CD4-positive, alpha-beta memory T cell (primary cell): ENCODE measurements at regions of chr12 and their contacts with region 1.

Region 1: DNA sequence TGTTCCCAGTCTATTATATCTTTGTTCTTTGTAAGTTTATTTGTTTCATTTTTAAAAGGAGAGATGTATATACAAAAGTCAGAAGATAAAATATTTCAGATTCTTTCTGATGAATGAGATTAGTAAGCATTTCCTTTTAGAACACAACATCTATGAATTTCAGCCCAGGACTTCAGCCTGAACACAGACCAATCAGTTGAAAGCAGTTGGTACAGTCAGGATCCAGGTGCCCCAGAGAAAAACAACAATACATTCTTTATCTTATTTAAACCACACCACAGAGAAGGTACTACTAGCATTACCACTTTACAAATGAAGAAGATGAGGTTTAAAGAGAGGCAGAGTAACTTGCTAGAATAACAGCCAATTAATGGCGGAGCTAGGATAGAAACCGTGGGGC is 114.2 kb upstream of the BTG1 start:
- DNase-seq: no peak
- H3K4me3 ChIP-seq: no peak overlapping the region
- H3K4me3 Mint-ChIP-seq: peak overlapping the region in 1 of 8 donors; percentile 1
- H3K27ac ChIP-seq: no peak overlapping the region
- H3K27ac Mint-ChIP-seq: peak overlapping the region in 2 of 7 donors; percentile 18 to 38
- H3K4me1 ChIP-seq: peaks cover 10% of the 10 kb centered on the region
- H3K4me1 Mint-ChIP-seq: peaks cover 11 to 22% (median 13%) of the 10 kb centered on the region in 4 donors
- H3K27me3 ChIP-seq: no peaks in the 10 kb centered on the region
- H3K27me3 Mint-ChIP-seq: no peaks in the 10 kb centered on the region

Region 2: GRCh38 chr12:92297932-92298696 is 38.3 kb after region 1 on chr12:
- CTCF ChIA-PET with region 1: no interaction called
- POLR2A ChIA-PET with region 1: no interaction called
- intact Hi-C with region 1: loop called (anchors 5 kb)
- DNase-seq: peak in 4 of 5 donors; percentile 33 to 49 (median 46)
- H3K4me3 ChIP-seq: no peak overlapping the region
- H3K4me3 Mint-ChIP-seq: peak overlapping the region; percentile 28 to 78 (median 72)
- H3K27ac ChIP-seq: no peak overlapping the region
- H3K27ac Mint-ChIP-seq: peak overlapping the region in 5 of 7 donors; percentile 76 to 93 (median 93)
- H3K4me1 ChIP-seq: peaks cover 40% of the 10 kb centered on the region
- H3K4me1 Mint-ChIP-seq: peaks cover 21 to 33% (median 28%) of the 10 kb centered on the region in 4 donors
- H3K27me3 ChIP-seq: no peaks in the 10 kb centered on the region
- H3K27me3 Mint-ChIP-seq: no peaks in the 10 kb centered on the region

Region 3: GRCh38 chr12:92369643-92370042 is 109.8 kb after region 1 on chr12:
- CTCF ChIA-PET with region 1: no interaction called
- POLR2A ChIA-PET with region 1: no interaction called
- intact Hi-C with region 1: no loop called
- DNase-seq: no peak
- H3K4me3 ChIP-seq: no peak overlapping the region
- H3K4me3 Mint-ChIP-seq: no peak overlapping the region
- H3K27ac ChIP-seq: no peak overlapping the region
- H3K27ac Mint-ChIP-seq: no peak overlapping the region
- H3K4me1 ChIP-seq: peaks cover 7% of the 10 kb centered on the region
- H3K4me1 Mint-ChIP-seq: peaks cover 5 to 16% (median 14%) of the 10 kb centered on the region in 4 donors
- H3K27me3 ChIP-seq: no peaks in the 10 kb centered on the region
- H3K27me3 Mint-ChIP-seq: no peaks in the 10 kb centered on the region

Region 4: DNA sequence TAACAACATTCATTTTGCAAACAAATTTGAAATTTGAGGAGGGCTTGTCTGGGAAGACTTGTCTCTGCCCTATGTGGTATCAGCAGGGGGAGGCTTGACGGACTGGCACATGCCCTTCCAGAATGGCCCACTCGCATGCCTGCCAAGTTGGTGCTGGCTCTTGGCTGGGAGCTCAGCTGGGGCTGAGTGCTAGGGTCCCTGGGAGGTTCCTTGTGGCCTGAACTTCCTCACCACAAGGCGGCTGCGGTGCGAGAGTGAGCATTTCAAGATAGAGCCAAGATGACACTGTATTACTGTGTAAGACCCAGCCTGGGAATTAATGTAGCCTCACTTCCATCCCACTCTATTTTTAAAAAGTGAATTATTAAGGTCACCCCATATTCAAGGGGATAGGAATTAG is 171.3 kb after region 1 on chr12:
- CTCF ChIA-PET with region 1: no interaction called
- POLR2A ChIA-PET with region 1: no interaction called
- intact Hi-C with region 1: no loop called
- DNase-seq: no peak
- H3K4me3 ChIP-seq: no peak overlapping the region
- H3K4me3 Mint-ChIP-seq: no peak overlapping the region
- H3K27ac ChIP-seq: no peak overlapping the region
- H3K27ac Mint-ChIP-seq: peak overlapping the region in 1 of 7 donors; percentile 19
- H3K4me1 ChIP-seq: no peaks in the 10 kb centered on the region
- H3K4me1 Mint-ChIP-seq: peaks cover 2 to 29% (median 10%) of the 10 kb centered on the region in 4 donors
- H3K27me3 ChIP-seq: no peaks in the 10 kb centered on the region
- H3K27me3 Mint-ChIP-seq: no peaks in the 10 kb centered on the region